ENCODE measurements at regions of chr10 and their contacts with region 1.

Region 1: DNA sequence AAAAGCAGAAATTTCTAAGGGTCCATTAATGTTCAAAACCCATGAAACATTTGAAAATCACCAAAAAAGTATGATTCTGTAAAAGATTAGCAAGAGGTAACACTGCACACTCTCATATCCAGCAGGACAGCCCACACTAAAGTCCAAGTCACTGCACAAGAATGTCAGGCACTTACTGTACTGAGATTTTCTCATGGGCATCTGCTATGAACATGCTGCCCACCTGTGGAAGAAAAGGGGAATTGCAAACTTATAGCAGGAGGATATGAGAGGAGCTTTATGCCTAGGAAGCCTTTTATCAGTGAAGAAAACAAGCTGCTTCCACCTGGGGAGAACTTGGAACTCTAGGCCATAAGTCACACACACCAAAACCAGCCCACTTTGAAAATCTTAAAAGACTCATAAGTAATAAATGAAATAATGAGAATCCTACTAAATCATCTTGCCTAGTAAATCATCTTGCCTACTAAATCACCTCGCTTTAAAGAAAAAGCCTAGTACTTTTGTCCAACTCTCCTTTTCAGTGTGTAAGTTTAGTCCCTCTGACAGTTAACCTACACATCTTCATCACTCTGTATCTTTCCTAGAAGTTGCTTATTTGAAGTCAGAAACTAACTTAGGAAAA is 46.1 kb downstream of the ARMH3 start:
- DNase-seq: peak; percentile 44
- ATAC-seq: peak; percentile 91
- H3K4me3 Mint-ChIP-seq: no peak overlapping the region
- H3K27ac Mint-ChIP-seq: no peak overlapping the region
- H3K4me1 Mint-ChIP-seq: no peaks in the 10 kb centered on the region
- H3K27me3 Mint-ChIP-seq: no peaks in the 10 kb centered on the region
- CTCF ChIP-seq: peak; percentile 90

Region 2: GRCh38 chr10:101879456-101880231 is 130.3 kb before region 1 on chr10:
- CTCF ChIA-PET with region 1: interaction called, 23 read pairs
- POLR2A ChIA-PET with region 1: no interaction called
- intact Hi-C with region 1: no loop called
- DNase-seq: no peak
- ATAC-seq: no peak
- H3K4me3 Mint-ChIP-seq: no peak overlapping the region
- H3K27ac Mint-ChIP-seq: no peak overlapping the region
- H3K4me1 Mint-ChIP-seq: peaks cover 12% of the 10 kb centered on the region
- H3K27me3 Mint-ChIP-seq: no peaks in the 10 kb centered on the region
- CTCF ChIP-seq: no peak

Region 3: DNA sequence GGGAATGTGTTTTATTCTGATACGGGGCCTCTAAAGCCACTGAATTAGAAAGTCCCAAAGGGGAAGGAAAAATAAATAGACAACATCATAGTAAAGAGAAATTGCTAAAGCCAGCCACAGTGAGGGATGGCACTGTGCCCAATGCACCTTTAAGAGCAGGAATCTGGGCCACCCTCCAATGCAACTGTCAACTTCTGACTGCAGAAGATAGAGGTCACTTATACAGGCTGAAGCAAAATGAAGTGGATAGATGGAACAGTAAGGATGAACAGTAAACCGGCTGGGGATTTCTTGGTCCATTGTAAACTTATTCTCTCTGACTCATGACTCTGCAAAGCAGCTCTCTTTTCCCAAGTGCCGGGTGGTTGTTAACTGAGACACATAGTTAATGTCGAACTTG is 112.3 kb before region 1 on chr10:
- CTCF ChIA-PET with region 1: interaction called, 92 read pairs
- POLR2A ChIA-PET with region 1: no interaction called
- intact Hi-C with region 1: no loop called
- DNase-seq: no peak
- ATAC-seq: no peak
- H3K4me3 Mint-ChIP-seq: no peak overlapping the region
- H3K27ac Mint-ChIP-seq: no peak overlapping the region
- H3K4me1 Mint-ChIP-seq: peaks cover 15% of the 10 kb centered on the region
- H3K27me3 Mint-ChIP-seq: no peaks in the 10 kb centered on the region
- CTCF ChIP-seq: no peak

Region 4: GRCh38 chr10:101959349-101959916 is 50.5 kb before region 1 on chr10:
- CTCF ChIA-PET with region 1: interaction called, 10 read pairs
- POLR2A ChIA-PET with region 1: no interaction called
- intact Hi-C with region 1: no loop called
- DNase-seq: no peak
- ATAC-seq: no peak
- H3K4me3 Mint-ChIP-seq: no peak overlapping the region
- H3K27ac Mint-ChIP-seq: peak overlapping the region; percentile 20
- H3K4me1 Mint-ChIP-seq: no peaks in the 10 kb centered on the region
- H3K27me3 Mint-ChIP-seq: no peaks in the 10 kb centered on the region
- CTCF ChIP-seq: no peak

Region 5: GRCh38 chr10:101993651-101994200 is 16.2 kb before region 1 on chr10:
- CTCF ChIA-PET with region 1: interaction called, 43 read pairs
- POLR2A ChIA-PET with region 1: no interaction called
- intact Hi-C with region 1: no loop called
- DNase-seq: no peak
- ATAC-seq: no peak
- H3K4me3 Mint-ChIP-seq: no peak overlapping the region
- H3K27ac Mint-ChIP-seq: no peak overlapping the region
- H3K4me1 Mint-ChIP-seq: peaks cover 6% of the 10 kb centered on the region
- H3K27me3 Mint-ChIP-seq: no peaks in the 10 kb centered on the region
- CTCF ChIP-seq: no peak

Region 6: GRCh38 chr10:102064868-102065560 is 55.1 kb after region 1 on chr10 and contains the start of gene HPS6:
- CTCF ChIA-PET with region 1: interaction called, 10 read pairs
- POLR2A ChIA-PET with region 1: no interaction called
- intact Hi-C with region 1: no loop called
- DNase-seq: peak; percentile 91
- ATAC-seq: peak; percentile 99
- H3K4me3 Mint-ChIP-seq: peak within 1 kb of the TSS; percentile 84
- H3K27ac Mint-ChIP-seq: peak within 1 kb of the TSS; percentile 90
- H3K4me1 Mint-ChIP-seq: peaks cover 33% of the 10 kb centered on the region
- H3K27me3 Mint-ChIP-seq: no peaks in the 10 kb centered on the region
- CTCF ChIP-seq: no peak
- total RNA-seq, gene HPS6: 18.0 to 18.1 TPM

Measured in activated CD8-positive, alpha-beta T cell treated with anti-CD3 and anti-CD28 coated beads for 36 hours (primary cell).